Left ventricle myocardium superior (tissue), 1 donor: ENCODE measurements at regions of chr1 and their contacts with region 1.

Region 1: GRCh38 chr1:43414634-43415223 is 25.0 kb downstream of the SZT2 start:
- DNase-seq: peak; percentile 44
- ATAC-seq: peak; percentile 84

Region 2: GRCh38 chr1:43227143-43227764 is 187.5 kb before region 1 on chr1:
- intact Hi-C with region 1: loop called (anchors 10 kb)
- DNase-seq: peak; percentile 87
- ATAC-seq: peak; percentile 80

Region 3: DNA sequence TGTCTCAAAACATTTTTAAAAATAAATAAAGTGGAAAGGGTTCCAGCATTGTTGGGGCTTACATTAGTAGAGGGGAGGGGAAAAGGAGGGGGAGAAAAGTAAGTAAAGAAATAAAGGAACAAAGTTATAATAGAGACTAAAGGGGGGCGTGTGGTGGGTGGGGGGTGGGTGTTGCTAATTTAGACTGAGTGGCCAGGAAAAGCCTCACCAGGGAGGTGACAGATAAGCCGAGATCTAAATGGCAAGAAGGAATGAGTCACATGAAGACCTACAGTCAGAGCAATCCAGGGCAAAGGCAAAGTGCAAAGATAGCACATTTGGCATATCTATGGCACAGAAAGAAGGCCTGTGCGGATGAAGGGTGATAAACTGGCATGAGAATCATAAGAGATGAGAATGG is 69.6 kb before region 1 on chr1:
- intact Hi-C with region 1: no loop called
- DNase-seq: no peak
- ATAC-seq: peak; percentile 39